ENCODE measurements at regions of chr5 and their contacts with region 1.

Region 1: GRCh38 chr5:91101600-91102379 is 281.3 kb downstream of the ARRDC3 start:
- DNase-seq: peak; percentile 78 to 81
- H3K4me3 ChIP-seq: no peak overlapping the region
- H3K4me3 Mint-ChIP-seq: peak overlapping the region; percentile 40
- H3K27ac Mint-ChIP-seq: no peak overlapping the region
- H3K4me1 ChIP-seq: no peaks in the 10 kb centered on the region
- H3K4me1 Mint-ChIP-seq: peaks cover 11% of the 10 kb centered on the region
- H3K27me3 ChIP-seq: no peaks in the 10 kb centered on the region
- H3K27me3 Mint-ChIP-seq: no peaks in the 10 kb centered on the region
- CTCF ChIP-seq: peak; percentile 81 to 84

Region 2: DNA sequence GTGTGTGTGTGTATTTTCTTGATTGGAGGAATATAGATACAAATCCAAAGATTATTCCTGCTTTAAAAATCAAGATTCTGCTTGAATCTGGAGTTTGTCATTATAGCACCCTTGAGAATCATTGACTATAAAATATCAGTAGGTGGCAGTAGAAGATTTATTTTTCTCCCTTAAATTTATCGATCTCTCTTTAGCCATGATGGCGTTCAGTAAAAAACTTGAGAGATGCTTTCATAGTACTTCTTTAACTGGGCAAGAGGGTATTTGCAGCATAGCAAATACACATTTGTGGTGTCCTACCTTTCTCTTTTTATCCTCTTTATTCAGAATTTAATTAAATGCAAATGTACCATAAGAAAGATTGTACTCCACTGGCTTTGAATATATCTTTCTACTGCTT is 235.5 kb before region 1 on chr5:
- CTCF ChIA-PET with region 1: no interaction called
- POLR2A ChIA-PET with region 1: no interaction called
- intact Hi-C with region 1: loop called (anchors 1 kb)
- DNase-seq: no peak
- H3K4me3 ChIP-seq: no peak overlapping the region
- H3K4me3 Mint-ChIP-seq: no peak overlapping the region
- H3K27ac Mint-ChIP-seq: no peak overlapping the region
- H3K4me1 ChIP-seq: peaks cover 25% of the 10 kb centered on the region
- H3K4me1 Mint-ChIP-seq: peaks cover 14% of the 10 kb centered on the region
- H3K27me3 ChIP-seq: no peaks in the 10 kb centered on the region
- H3K27me3 Mint-ChIP-seq: no peaks in the 10 kb centered on the region
- CTCF ChIP-seq: peak; percentile 34 to 42

Region 3: GRCh38 chr5:91162534-91163381 is 61.0 kb after region 1 on chr5:
- CTCF ChIA-PET with region 1: no interaction called
- POLR2A ChIA-PET with region 1: no interaction called
- intact Hi-C with region 1: loop called (anchors 2 kb)
- DNase-seq: peak; percentile 80 to 85
- H3K4me3 ChIP-seq: no peak overlapping the region
- H3K4me3 Mint-ChIP-seq: peak overlapping the region; percentile 20
- H3K27ac Mint-ChIP-seq: peak overlapping the region; percentile 62
- H3K4me1 ChIP-seq: peaks cover 33% of the 10 kb centered on the region
- H3K4me1 Mint-ChIP-seq: peaks cover 20% of the 10 kb centered on the region
- H3K27me3 ChIP-seq: no peaks in the 10 kb centered on the region
- H3K27me3 Mint-ChIP-seq: no peaks in the 10 kb centered on the region
- CTCF ChIP-seq: no peak

Region 4: GRCh38 chr5:91176288-91177016 is 74.7 kb after region 1 on chr5:
- CTCF ChIA-PET with region 1: no interaction called
- POLR2A ChIA-PET with region 1: no interaction called
- intact Hi-C with region 1: loop called (anchors 5 kb)
- DNase-seq: peak in 1 of 2 experiments; percentile 34
- H3K4me3 ChIP-seq: no peak overlapping the region
- H3K4me3 Mint-ChIP-seq: no peak overlapping the region
- H3K27ac Mint-ChIP-seq: peak overlapping the region; percentile 61
- H3K4me1 ChIP-seq: peaks cover 15% of the 10 kb centered on the region
- H3K4me1 Mint-ChIP-seq: peaks cover 10% of the 10 kb centered on the region
- H3K27me3 ChIP-seq: no peaks in the 10 kb centered on the region
- H3K27me3 Mint-ChIP-seq: no peaks in the 10 kb centered on the region
- CTCF ChIP-seq: no peak

Region 5: DNA sequence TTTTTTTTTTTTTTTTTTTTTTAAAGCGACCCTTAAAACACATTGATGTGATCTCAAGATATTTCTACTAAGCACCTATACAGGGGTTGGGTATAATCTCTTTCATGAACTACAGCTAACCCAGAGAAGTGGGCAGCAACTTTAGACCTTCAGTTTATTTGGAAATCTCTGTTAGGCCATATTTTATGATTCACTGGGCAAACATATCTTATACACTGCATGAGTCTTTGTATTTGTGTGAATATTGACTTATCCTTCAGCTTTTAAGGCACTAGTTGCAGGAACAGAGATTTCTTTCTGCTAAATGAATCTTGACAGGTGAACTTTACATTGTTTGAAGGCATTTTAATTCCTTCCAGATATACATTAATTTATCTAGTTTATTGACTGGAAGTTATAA is 87.0 kb after region 1 on chr5:
- CTCF ChIA-PET with region 1: no interaction called
- POLR2A ChIA-PET with region 1: no interaction called
- intact Hi-C with region 1: no loop called
- DNase-seq: no peak
- H3K4me3 ChIP-seq: no peak overlapping the region
- H3K4me3 Mint-ChIP-seq: no peak overlapping the region
- H3K27ac Mint-ChIP-seq: no peak overlapping the region
- H3K4me1 ChIP-seq: peaks cover 34% of the 10 kb centered on the region
- H3K4me1 Mint-ChIP-seq: peaks cover 39% of the 10 kb centered on the region
- H3K27me3 ChIP-seq: no peaks in the 10 kb centered on the region
- H3K27me3 Mint-ChIP-seq: no peaks in the 10 kb centered on the region
- CTCF ChIP-seq: no peak

Region 6: DNA sequence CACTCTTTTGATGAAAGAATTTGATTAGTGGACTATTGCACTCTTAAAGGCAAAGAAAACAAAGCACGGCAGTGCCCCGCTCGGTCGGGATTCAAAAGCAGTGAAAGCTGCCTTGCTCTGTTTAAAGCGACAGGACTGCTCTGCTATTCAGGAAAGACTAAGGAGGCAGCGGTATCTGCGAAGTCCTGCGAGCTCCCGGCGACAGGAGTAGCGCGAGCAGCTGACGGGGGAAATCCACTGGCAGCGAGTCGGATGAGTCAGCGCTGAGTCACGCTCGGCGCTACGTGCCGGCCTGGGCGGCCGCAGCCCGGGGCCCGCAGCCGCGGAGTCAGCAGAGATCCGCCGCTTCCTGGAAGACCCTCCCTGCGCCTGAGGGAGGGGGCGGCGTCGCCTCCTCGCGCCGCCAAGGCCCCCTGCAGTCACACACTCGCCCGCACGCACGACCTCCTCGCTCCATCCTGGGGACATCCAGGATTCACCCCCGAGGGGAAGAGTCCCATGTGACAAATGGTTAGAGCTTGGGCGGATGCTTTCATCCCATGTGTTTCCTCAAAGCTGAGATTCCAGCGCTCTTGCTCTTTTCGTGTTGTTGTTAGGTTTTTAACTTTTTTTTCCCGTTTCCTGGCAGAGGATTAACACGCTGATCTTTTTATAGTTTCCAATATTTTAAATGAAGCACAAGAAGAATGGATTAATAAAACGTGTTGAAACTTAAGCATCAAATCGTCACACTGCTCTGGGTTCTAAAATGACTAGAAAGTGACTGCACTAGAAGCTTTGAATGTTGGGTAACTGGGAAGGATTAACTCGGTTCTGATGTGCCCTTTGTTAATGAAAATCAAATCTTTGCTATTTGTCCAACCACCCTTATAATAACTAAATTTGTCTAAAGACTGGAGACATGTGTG is 178.8 kb after region 1 on chr5:
- CTCF ChIA-PET with region 1: no interaction called
- POLR2A ChIA-PET with region 1: no interaction called
- intact Hi-C with region 1: loop called (anchors 5 kb)
- DNase-seq: peak; percentile 89 to 91
- H3K4me3 ChIP-seq: peak overlapping the region; percentile 48
- H3K4me3 Mint-ChIP-seq: peak overlapping the region; percentile 88
- H3K27ac Mint-ChIP-seq: peak overlapping the region; percentile 79
- H3K4me1 ChIP-seq: peaks cover 13% of the 10 kb centered on the region; the same call in 1 of the 2 replicates
- H3K4me1 Mint-ChIP-seq: peaks cover 8% of the 10 kb centered on the region
- H3K27me3 ChIP-seq: no peaks in the 10 kb centered on the region
- H3K27me3 Mint-ChIP-seq: no peaks in the 10 kb centered on the region
- CTCF ChIP-seq: no peak

Region 7: GRCh38 chr5:91383027-91383955 is 281.5 kb after region 1 on chr5 and contains the start of gene ARRDC3:
- CTCF ChIA-PET with region 1: interaction called, 3 read pairs
- POLR2A ChIA-PET with region 1: interaction called, 3 read pairs
- intact Hi-C with region 1: loop called (anchors 1 kb)
- DNase-seq: peak; percentile 97 to 98
- H3K4me3 ChIP-seq: peak within 1 kb of the TSS; percentile 65
- H3K4me3 Mint-ChIP-seq: peak within 1 kb of the TSS; percentile 88
- H3K27ac Mint-ChIP-seq: peak within 1 kb of the TSS; percentile 94
- H3K4me1 ChIP-seq: peaks cover 11% of the 10 kb centered on the region
- H3K4me1 Mint-ChIP-seq: no peaks in the 10 kb centered on the region
- H3K27me3 ChIP-seq: no peaks in the 10 kb centered on the region
- H3K27me3 Mint-ChIP-seq: no peaks in the 10 kb centered on the region
- CTCF ChIP-seq: peak in 1 of 2 experiments; percentile 12
- total RNA-seq, gene ARRDC3: 34.5 and 38.7 TPM in 2 replicates

Region 8: DNA sequence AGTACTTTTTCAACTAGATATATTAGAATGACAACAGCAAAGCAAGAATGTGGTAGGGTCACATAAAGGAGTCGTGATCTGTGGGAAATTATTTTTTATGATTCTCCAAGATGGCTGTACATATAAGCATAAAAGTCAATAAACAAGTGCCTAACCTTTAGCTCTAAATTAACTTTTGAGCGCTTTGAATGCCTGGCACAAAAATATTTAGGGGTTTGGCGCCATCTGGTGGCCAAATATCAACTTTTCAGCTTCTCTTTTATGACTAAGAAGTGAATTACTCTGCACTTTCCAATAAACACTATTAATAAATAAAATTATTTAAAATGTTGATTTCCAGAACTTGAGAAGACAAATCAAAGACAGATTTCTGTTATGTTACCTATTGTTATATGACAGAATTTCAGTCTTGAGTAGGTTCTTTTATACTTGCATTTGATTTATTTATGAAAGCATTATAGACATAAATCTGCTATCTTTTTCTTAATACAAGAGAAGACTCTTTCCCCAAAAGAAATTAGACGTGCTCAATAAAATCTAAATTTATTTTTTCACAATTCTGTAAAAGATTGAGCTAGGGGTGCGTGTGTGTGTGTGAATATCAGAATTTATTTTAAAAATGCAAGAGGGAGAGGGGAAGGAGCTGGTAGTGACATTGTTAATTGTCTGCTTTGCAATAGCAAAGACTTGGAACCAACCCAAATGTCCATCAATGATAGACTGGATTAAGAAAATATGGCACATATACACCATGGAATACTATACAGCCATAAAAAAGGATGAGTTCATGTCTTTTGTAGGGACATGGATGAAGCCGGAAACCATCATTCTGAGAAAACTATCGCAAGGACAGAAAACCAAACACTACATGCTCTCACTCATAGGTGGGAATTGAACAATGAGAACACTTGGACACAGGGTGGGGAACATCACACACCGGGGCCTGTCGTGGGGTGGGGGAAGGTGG is 318.1 kb after region 1 on chr5:
- CTCF ChIA-PET with region 1: no interaction called
- POLR2A ChIA-PET with region 1: no interaction called
- intact Hi-C with region 1: loop called (anchors 1 kb)
- DNase-seq: peak; percentile 43 to 54
- H3K4me3 ChIP-seq: no peak overlapping the region
- H3K4me3 Mint-ChIP-seq: no peak overlapping the region
- H3K27ac Mint-ChIP-seq: no peak overlapping the region
- H3K4me1 ChIP-seq: no peaks in the 10 kb centered on the region
- H3K4me1 Mint-ChIP-seq: peaks cover 7% of the 10 kb centered on the region
- H3K27me3 ChIP-seq: no peaks in the 10 kb centered on the region
- H3K27me3 Mint-ChIP-seq: no peaks in the 10 kb centered on the region
- CTCF ChIP-seq: peak; percentile 58 to 76